ENCODE measurements at regions of chr1 and their contacts with region 1.

Region 1: GRCh38 chr1:236103646-236104218 is 38.6 kb upstream of the GPR137B start:
- DNase-seq: peak; percentile 29 to 83 (median 51)
- ATAC-seq: peak; percentile 70
- H3K4me3 ChIP-seq: no peak overlapping the region
- H3K4me3 Mint-ChIP-seq: no peak overlapping the region
- H3K27ac ChIP-seq: no peak overlapping the region
- H3K27ac Mint-ChIP-seq: no peak overlapping the region
- H3K4me1 ChIP-seq: peaks cover 4% of the 10 kb centered on the region
- H3K4me1 Mint-ChIP-seq: peaks cover 5% of the 10 kb centered on the region
- H3K27me3 ChIP-seq: no peaks in the 10 kb centered on the region
- H3K27me3 Mint-ChIP-seq: peaks cover 5% of the 10 kb centered on the region
- CTCF ChIP-seq: peak; percentile 83

Region 2: GRCh38 chr1:236281654-236282424 is 178.1 kb after region 1 on chr1 and contains the start of gene ERO1B:
- CTCF ChIA-PET with region 1: no interaction called
- POLR2A ChIA-PET with region 1: no interaction called
- intact Hi-C with region 1: loop called (anchors 5 to 10 kb)
- DNase-seq: peak; percentile 92 to 99 (median 98)
- ATAC-seq: peak; percentile 92
- H3K4me3 ChIP-seq: peak within 1 kb of the TSS; percentile 88
- H3K4me3 Mint-ChIP-seq: peak within 1 kb of the TSS; percentile 97
- H3K27ac ChIP-seq: peak within 1 kb of the TSS; percentile 63 to 81
- H3K27ac Mint-ChIP-seq: peak within 1 kb of the TSS; percentile 80
- H3K4me1 ChIP-seq: peaks cover 25% of the 10 kb centered on the region
- H3K4me1 Mint-ChIP-seq: peaks cover 57% of the 10 kb centered on the region
- H3K27me3 ChIP-seq: no peaks in the 10 kb centered on the region
- H3K27me3 Mint-ChIP-seq: no peaks in the 10 kb centered on the region
- CTCF ChIP-seq: no peak
- total RNA-seq, gene ERO1B: 15.2 to 16.5 TPM

Region 3: GRCh38 chr1:236489710-236490377 is 386.1 kb after region 1 on chr1:
- CTCF ChIA-PET with region 1: no interaction called
- POLR2A ChIA-PET with region 1: no interaction called
- intact Hi-C with region 1: loop called in 1 of 2 experiments (anchors 1 kb)
- DNase-seq: peak in 3 of 14 experiments; percentile 53 to 71 (median 63)
- ATAC-seq: peak; percentile 59
- H3K4me3 ChIP-seq: no peak overlapping the region
- H3K4me3 Mint-ChIP-seq: no peak overlapping the region
- H3K27ac ChIP-seq: no peak overlapping the region
- H3K27ac Mint-ChIP-seq: no peak overlapping the region
- H3K4me1 ChIP-seq: no peaks in the 10 kb centered on the region
- H3K4me1 Mint-ChIP-seq: peaks cover 9% of the 10 kb centered on the region
- H3K27me3 ChIP-seq: no peaks in the 10 kb centered on the region
- H3K27me3 Mint-ChIP-seq: peaks cover 6% of the 10 kb centered on the region
- CTCF ChIP-seq: peak; percentile 85

Region 4: GRCh38 chr1:236868625-236869467 is 765.1 kb after region 1 on chr1:
- CTCF ChIA-PET with region 1: no interaction called
- POLR2A ChIA-PET with region 1: no interaction called
- intact Hi-C with region 1: loop called (anchors 1 to 2 kb)
- DNase-seq: peak in 13 of 14 experiments; percentile 7 to 76 (median 25)
- ATAC-seq: peak; percentile 51
- H3K4me3 ChIP-seq: no peak overlapping the region
- H3K4me3 Mint-ChIP-seq: no peak overlapping the region
- H3K27ac ChIP-seq: no peak overlapping the region
- H3K27ac Mint-ChIP-seq: no peak overlapping the region
- H3K4me1 ChIP-seq: no peaks in the 10 kb centered on the region
- H3K4me1 Mint-ChIP-seq: no peaks in the 10 kb centered on the region
- H3K27me3 ChIP-seq: no peaks in the 10 kb centered on the region
- H3K27me3 Mint-ChIP-seq: no peaks in the 10 kb centered on the region
- CTCF ChIP-seq: peak; percentile 96

Region 5: DNA sequence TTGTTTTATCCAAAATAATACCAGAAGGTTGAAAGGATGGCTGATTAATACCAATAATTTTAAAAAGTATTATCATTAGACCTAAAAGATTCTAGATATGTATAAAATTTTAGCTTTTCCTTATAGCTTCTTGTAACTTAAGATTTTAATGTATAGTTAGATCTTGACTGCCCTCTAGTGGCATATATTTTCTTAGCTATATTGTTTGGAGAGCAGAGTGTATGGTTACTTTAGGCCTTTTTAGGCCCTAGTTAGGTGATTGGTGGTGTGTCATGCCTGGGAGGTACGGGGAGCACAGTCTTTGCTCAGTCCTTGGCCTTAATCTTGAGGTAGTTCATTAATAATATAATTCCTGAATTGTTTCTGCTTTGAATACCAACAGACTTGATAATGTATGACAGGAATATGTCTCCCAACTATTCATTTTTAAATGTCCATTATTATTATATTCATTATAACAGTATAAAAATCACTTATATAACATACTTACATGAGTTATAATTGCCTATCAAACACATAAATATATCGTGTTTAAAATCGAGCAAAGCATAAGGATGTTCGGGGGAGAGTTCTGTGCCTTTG is 1458.6 kb after region 1 on chr1:
- CTCF ChIA-PET with region 1: interaction called, 4 read pairs
- POLR2A ChIA-PET with region 1: no interaction called
- intact Hi-C with region 1: loop called in 1 of 2 experiments (anchors 2 kb)
- DNase-seq: peak in 3 of 14 experiments; percentile 57 to 64 (median 59)
- ATAC-seq: no peak
- H3K4me3 ChIP-seq: no peak overlapping the region
- H3K4me3 Mint-ChIP-seq: no peak overlapping the region
- H3K27ac ChIP-seq: no peak overlapping the region
- H3K27ac Mint-ChIP-seq: no peak overlapping the region
- H3K4me1 ChIP-seq: no peaks in the 10 kb centered on the region
- H3K4me1 Mint-ChIP-seq: no peaks in the 10 kb centered on the region
- H3K27me3 ChIP-seq: no peaks in the 10 kb centered on the region
- H3K27me3 Mint-ChIP-seq: peaks cover 7% of the 10 kb centered on the region
- CTCF ChIP-seq: peak; percentile 79

Measured in CD4-positive, alpha-beta T cell (primary cell).